ENCODE measurements at regions of chr19 and their contacts with region 1.

Region 1: GRCh38 chr19:15187026-15188007 is 13.5 kb downstream of the NOTCH3 start:
- DNase-seq: peak in 1 of 2 experiments; percentile 66
- H3K4me3 ChIP-seq: no peak overlapping the region
- H3K27ac ChIP-seq: no peak overlapping the region
- H3K4me1 ChIP-seq: no peaks in the 10 kb centered on the region
- H3K27me3 ChIP-seq: no peaks in the 10 kb centered on the region
- CTCF ChIP-seq: no peak

Region 2: GRCh38 chr19:14689598-14690503 is 497.5 kb before region 1 on chr19 and contains the start of gene ZNF333:
- CTCF ChIA-PET with region 1: interaction called, 12 read pairs
- POLR2A ChIA-PET with region 1: no interaction called
- intact Hi-C with region 1: no loop called
- DNase-seq: peak; percentile 78 to 92
- H3K4me3 ChIP-seq: peak within 1 kb of the TSS; percentile 69
- H3K27ac ChIP-seq: peak within 1 kb of the TSS; percentile 88
- H3K4me1 ChIP-seq: peaks cover 16% of the 10 kb centered on the region
- H3K27me3 ChIP-seq: no peaks in the 10 kb centered on the region
- CTCF ChIP-seq: no peak
- total RNA-seq, gene ZNF333: 10.1 and 10.5 TPM in 2 replicates

Region 3: DNA sequence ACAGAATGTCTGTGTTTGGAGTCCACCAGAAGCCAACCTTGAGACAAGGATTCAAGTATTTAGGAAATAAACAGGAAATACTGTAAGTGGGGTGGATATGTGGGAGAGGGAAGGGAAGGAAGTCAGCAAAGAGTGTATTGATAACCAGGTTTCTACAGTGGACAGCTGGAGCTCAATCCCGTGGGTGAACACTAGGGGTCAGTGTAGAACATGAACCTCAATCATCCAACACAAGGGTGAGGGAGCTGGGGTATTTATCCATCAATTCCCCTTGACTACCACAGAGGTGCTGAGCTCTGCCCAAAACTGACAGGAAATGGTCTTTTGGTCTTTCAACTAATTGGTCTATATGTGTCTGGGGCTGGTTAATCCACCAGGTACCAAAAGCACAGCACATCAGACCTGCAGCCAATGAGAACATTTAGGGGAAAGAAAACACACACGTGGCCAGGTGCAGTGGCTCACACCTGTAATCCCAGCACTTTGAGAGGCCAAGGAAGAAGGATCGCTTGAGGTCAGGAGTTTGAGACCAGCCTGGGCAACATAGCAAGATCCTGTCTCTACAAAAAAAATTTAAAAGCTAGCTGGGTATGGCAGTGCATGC is 85.7 kb before region 1 on chr19:
- CTCF ChIA-PET with region 1: no interaction called
- POLR2A ChIA-PET with region 1: no interaction called
- intact Hi-C with region 1: no loop called
- DNase-seq: peak in 1 of 2 experiments; percentile 34
- H3K4me3 ChIP-seq: no peak overlapping the region
- H3K27ac ChIP-seq: no peak overlapping the region
- H3K4me1 ChIP-seq: peaks cover 8% of the 10 kb centered on the region; the same call in 1 of the 2 replicates
- H3K27me3 ChIP-seq: no peaks in the 10 kb centered on the region
- CTCF ChIP-seq: peak; percentile 85